ENCODE measurements at regions of chr4 and their contacts with region 1.

Region 1: GRCh38 chr4:114386637-114387233 is 211.9 kb upstream of the UGT8 start:
- DNase-seq: no peak
- H3K4me3 ChIP-seq: no peak overlapping the region
- H3K27ac ChIP-seq: no peak overlapping the region
- H3K4me1 ChIP-seq: no peaks in the 10 kb centered on the region
- H3K27me3 ChIP-seq: no peaks in the 10 kb centered on the region
- CTCF ChIP-seq: peak in 5 of 6 experiments; percentile 30 to 92 (median 64)
- POLR2A ChIP-seq: no peak

Region 2: DNA sequence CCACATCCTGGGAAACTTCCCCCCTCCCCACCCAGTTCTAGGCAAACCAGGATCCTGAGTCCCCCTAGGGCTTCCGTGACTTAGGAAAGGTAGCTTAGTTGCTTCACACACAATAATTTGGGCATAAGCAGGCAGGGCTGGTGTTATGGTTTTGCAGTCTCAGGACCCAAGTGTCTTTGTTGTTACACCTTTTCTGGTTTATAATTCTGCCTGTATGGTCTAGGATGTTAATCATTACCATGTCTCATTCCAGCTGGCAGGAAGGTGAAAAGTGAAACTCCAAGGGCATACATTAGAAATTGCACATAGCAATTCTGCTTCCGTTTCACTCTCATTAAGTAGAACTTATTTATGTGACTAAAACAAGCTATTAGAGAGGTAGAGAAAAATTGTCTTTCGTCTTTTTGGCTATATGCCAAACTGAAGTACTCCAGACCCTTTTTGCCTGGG is 228.7 kb after region 1 on chr4:
- intact Hi-C with region 1: no loop called
- DNase-seq: no peak
- H3K4me3 ChIP-seq: no peak overlapping the region
- H3K27ac ChIP-seq: no peak overlapping the region
- H3K4me1 ChIP-seq: peaks cover 0 to 5% of the 10 kb centered on the region in 2 donors
- H3K27me3 ChIP-seq: no peaks in the 10 kb centered on the region
- CTCF ChIP-seq: no peak
- POLR2A ChIP-seq: no peak

Region 3: GRCh38 chr4:114659386-114660008 is 272.8 kb after region 1 on chr4:
- intact Hi-C with region 1: loop called (anchors 5 kb)
- DNase-seq: peak; percentile 66 to 68
- H3K4me3 ChIP-seq: no peak overlapping the region
- H3K27ac ChIP-seq: no peak overlapping the region
- H3K4me1 ChIP-seq: no peaks in the 10 kb centered on the region
- H3K27me3 ChIP-seq: no peaks in the 10 kb centered on the region
- CTCF ChIP-seq: peak; percentile 51 to 86 (median 65)
- POLR2A ChIP-seq: no peak

Region 4: GRCh38 chr4:114694770-114695169 is 308.0 kb after region 1 on chr4:
- intact Hi-C with region 1: loop called (anchors 10 kb)
- DNase-seq: no peak
- H3K4me3 ChIP-seq: no peak overlapping the region
- H3K27ac ChIP-seq: no peak overlapping the region
- H3K4me1 ChIP-seq: no peaks in the 10 kb centered on the region
- H3K27me3 ChIP-seq: no peaks in the 10 kb centered on the region
- CTCF ChIP-seq: peak; percentile 39 to 68 (median 48)
- POLR2A ChIP-seq: no peak

Measured in thyroid gland (tissue), 4 donors.